HepG2 (cell line): ENCODE measurements at regions of chr7 and their contacts with region 1.

Region 1: GRCh38 chr7:2209146-2209960 is 23.4 kb downstream of the MAD1L1 start:
- DNase-seq: peak; percentile 30
- ATAC-seq: peak; percentile 86
- H3K4me3 ChIP-seq: no peak overlapping the region
- H3K27ac ChIP-seq: no peak overlapping the region
- H3K4me1 ChIP-seq: no peaks in the 10 kb centered on the region
- H3K27me3 ChIP-seq: no peaks in the 10 kb centered on the region
- CTCF ChIP-seq: peak; percentile 92
- EP300 ChIP-seq: no peak
- POLR2A ChIP-seq: no peak
- RAD21 ChIP-seq: peak; percentile 87

Region 2: GRCh38 chr7:1579481-1580421 is 629.6 kb before region 1 on chr7:
- CTCF ChIA-PET with region 1: no interaction called
- POLR2A ChIA-PET with region 1: no interaction called
- in situ Hi-C with region 1: loop called (anchors 25 kb)
- intact Hi-C with region 1: no loop called
- DNase-seq: peak; percentile 41
- ATAC-seq: peak; percentile 98
- H3K4me3 ChIP-seq: no peak overlapping the region
- H3K27ac ChIP-seq: no peak overlapping the region
- H3K4me1 ChIP-seq: no peaks in the 10 kb centered on the region
- H3K27me3 ChIP-seq: peaks cover 0 to 12% of the 10 kb centered on the region in 2 experiments; a peak in 3 of 5 replicates
- CTCF ChIP-seq: peak; percentile 96
- EP300 ChIP-seq: no peak
- POLR2A ChIP-seq: no peak
- RAD21 ChIP-seq: peak; percentile 86

Region 3: GRCh38 chr7:2104107-2104710 is 105.1 kb before region 1 on chr7:
- CTCF ChIA-PET with region 1: no interaction called
- POLR2A ChIA-PET with region 1: no interaction called
- in situ Hi-C with region 1: loop called (anchors 5 kb)
- intact Hi-C with region 1: no loop called
- DNase-seq: peak; percentile 51
- ATAC-seq: peak; percentile 55
- H3K4me3 ChIP-seq: no peak overlapping the region
- H3K27ac ChIP-seq: no peak overlapping the region
- H3K4me1 ChIP-seq: peaks cover 36% of the 10 kb centered on the region
- H3K27me3 ChIP-seq: no peaks in the 10 kb centered on the region
- CTCF ChIP-seq: peak; percentile 62
- EP300 ChIP-seq: no peak
- POLR2A ChIP-seq: no peak
- RAD21 ChIP-seq: peak; percentile 53; the same call in 1 of the 2 replicates

Region 4: GRCh38 chr7:2281541-2281940 is 72.2 kb after region 1 on chr7:
- CTCF ChIA-PET with region 1: no interaction called
- POLR2A ChIA-PET with region 1: no interaction called
- in situ Hi-C with region 1: no loop called
- intact Hi-C with region 1: no loop called
- DNase-seq: no peak
- ATAC-seq: no peak
- H3K4me3 ChIP-seq: no peak overlapping the region
- H3K27ac ChIP-seq: no peak overlapping the region
- H3K4me1 ChIP-seq: peaks cover 42% of the 10 kb centered on the region
- H3K27me3 ChIP-seq: no peaks in the 10 kb centered on the region
- CTCF ChIP-seq: no peak
- EP300 ChIP-seq: no peak
- POLR2A ChIP-seq: no peak
- RAD21 ChIP-seq: no peak

Region 5: GRCh38 chr7:2824678-2825461 is 615.5 kb after region 1 on chr7:
- CTCF ChIA-PET with region 1: no interaction called
- POLR2A ChIA-PET with region 1: no interaction called
- in situ Hi-C with region 1: no loop called
- intact Hi-C with region 1: no loop called
- DNase-seq: no peak
- ATAC-seq: no peak
- H3K4me3 ChIP-seq: no peak overlapping the region
- H3K27ac ChIP-seq: no peak overlapping the region
- H3K4me1 ChIP-seq: peaks cover 85% of the 10 kb centered on the region
- H3K27me3 ChIP-seq: no peaks in the 10 kb centered on the region
- CTCF ChIP-seq: no peak
- EP300 ChIP-seq: no peak
- POLR2A ChIP-seq: no peak
- RAD21 ChIP-seq: no peak